OCI-LY7 (cell line): ENCODE measurements at regions of chr14 and their contacts with region 1.

Region 1: GRCh38 chr14:22570132-22570949 is 18.7 kb downstream of the DAD1 start:
- DNase-seq: peak; percentile 98
- H3K4me3 ChIP-seq: peak overlapping the region; percentile 65
- H3K27ac ChIP-seq: peak overlapping the region; percentile 83
- H3K4me1 ChIP-seq: peaks cover 56% of the 10 kb centered on the region
- CTCF ChIP-seq: peak; percentile 100

Region 2: GRCh38 chr14:22386924-22387775 is 183.2 kb before region 1 on chr14:
- CTCF ChIA-PET with region 1: interaction called, 15 read pairs
- POLR2A ChIA-PET with region 1: interaction called, 13 read pairs
- intact Hi-C with region 1: loop called (anchors 1 kb)
- DNase-seq: peak; percentile 93
- H3K4me3 ChIP-seq: peak overlapping the region; percentile 33
- H3K27ac ChIP-seq: peak overlapping the region; percentile 49
- H3K4me1 ChIP-seq: peaks cover 94% of the 10 kb centered on the region
- CTCF ChIP-seq: peak; percentile 94

Region 3: GRCh38 chr14:22531451-22532344 is 38.6 kb before region 1 on chr14:
- CTCF ChIA-PET with region 1: no interaction called
- POLR2A ChIA-PET with region 1: interaction called, 23 read pairs
- intact Hi-C with region 1: no loop called
- DNase-seq: peak; percentile 79
- H3K4me3 ChIP-seq: peak overlapping the region; percentile 70
- H3K27ac ChIP-seq: peak overlapping the region; percentile 88
- H3K4me1 ChIP-seq: peaks cover 84% of the 10 kb centered on the region
- CTCF ChIP-seq: no peak

Region 4: DNA sequence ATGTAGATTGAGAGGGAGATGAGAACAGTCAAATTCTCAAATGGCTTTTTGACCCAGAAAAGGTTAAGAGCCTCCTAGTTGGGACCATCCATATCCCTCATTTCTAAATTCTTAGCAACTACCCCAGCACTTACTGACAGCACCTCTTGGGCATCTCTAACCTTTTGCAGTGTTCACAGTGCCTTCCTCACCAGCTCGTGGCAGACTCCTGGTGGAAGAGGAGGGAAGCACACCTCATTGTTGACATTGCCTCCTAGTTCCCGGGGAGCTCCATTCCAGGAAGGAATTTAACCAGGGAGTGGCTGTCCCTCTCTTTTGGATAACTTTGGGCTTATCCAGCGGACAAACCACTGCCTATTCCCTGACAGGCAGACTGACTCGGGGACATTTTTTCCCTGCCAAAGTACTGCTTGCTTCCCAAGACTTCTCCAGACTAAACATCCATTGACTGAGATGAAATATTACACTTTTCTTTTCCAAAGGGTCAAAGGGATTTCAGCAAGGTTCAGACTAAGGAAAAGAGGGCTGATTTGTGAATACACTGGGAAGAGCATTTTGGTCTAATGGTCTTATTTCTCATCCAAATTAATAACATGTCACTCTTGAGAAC is 82.8 kb after region 1 on chr14:
- CTCF ChIA-PET with region 1: interaction called, 8 read pairs
- POLR2A ChIA-PET with region 1: interaction called, 5 read pairs
- intact Hi-C with region 1: loop called (anchors 1 kb)
- DNase-seq: peak; percentile 72
- H3K4me3 ChIP-seq: no peak overlapping the region
- H3K27ac ChIP-seq: no peak overlapping the region
- H3K4me1 ChIP-seq: no peaks in the 10 kb centered on the region
- CTCF ChIP-seq: peak; percentile 84

Region 5: GRCh38 chr14:22852940-22853767 is 282.8 kb after region 1 on chr14:
- CTCF ChIA-PET with region 1: interaction called, 4 read pairs
- POLR2A ChIA-PET with region 1: interaction called, 3 read pairs
- intact Hi-C with region 1: loop called (anchors 1 kb)
- DNase-seq: peak; percentile 90
- H3K4me3 ChIP-seq: peak overlapping the region; percentile 66
- H3K27ac ChIP-seq: peak overlapping the region; percentile 48
- H3K4me1 ChIP-seq: peaks cover 14% of the 10 kb centered on the region
- CTCF ChIP-seq: peak; percentile 93

Region 6: GRCh38 chr14:23406244-23406643 is 835.9 kb after region 1 on chr14:
- CTCF ChIA-PET with region 1: no interaction called
- POLR2A ChIA-PET with region 1: no interaction called
- intact Hi-C with region 1: no loop called
- DNase-seq: peak; percentile 14
- H3K4me3 ChIP-seq: no peak overlapping the region
- H3K27ac ChIP-seq: no peak overlapping the region
- H3K4me1 ChIP-seq: no peaks in the 10 kb centered on the region
- CTCF ChIP-seq: no peak